ENCODE measurements at regions of chr5 and their contacts with region 1.

Region 1: GRCh38 chr5:159209438-159210305 is at the start of gene RNF145:
- DNase-seq: peak; percentile 90 to 95 (median 94)
- ATAC-seq: peak; percentile 57
- H3K4me3 ChIP-seq: peak within 1 kb of the TSS; percentile 62
- H3K27ac ChIP-seq: peak within 1 kb of the TSS; percentile 96
- H3K4me1 ChIP-seq: peaks cover 9 to 42% of the 10 kb centered on the region in 2 experiments
- H3K27me3 ChIP-seq: no peaks in the 10 kb centered on the region
- CTCF ChIP-seq: no peak
- EP300 ChIP-seq: no peak
- POLR2A ChIP-seq: peak; percentile 86
- RAD21 ChIP-seq: 0 out of 4 replicates have a peak, but pooled peaks of 1 of the 2 experiments have one; percentile 4
- polyA plus RNA-seq, gene RNF145: 13.6 to 18.8 TPM

Region 2: GRCh38 chr5:159156426-159157238 is 53.0 kb before region 1 on chr5:
- CTCF ChIA-PET with region 1: no interaction called
- POLR2A ChIA-PET with region 1: interaction called, 3 read pairs
- in situ Hi-C with region 1: no loop called
- intact Hi-C with region 1: loop called (anchors 5 kb)
- DNase-seq: peak; percentile 71 to 80 (median 72)
- ATAC-seq: peak; percentile 97
- H3K4me3 ChIP-seq: no peak overlapping the region
- H3K27ac ChIP-seq: no peak overlapping the region
- H3K4me1 ChIP-seq: no peaks in the 10 kb centered on the region
- H3K27me3 ChIP-seq: no peaks in the 10 kb centered on the region
- CTCF ChIP-seq: peak; percentile 66 to 87 (median 76); a peak in 5 of 6 replicates
- EP300 ChIP-seq: no peak
- POLR2A ChIP-seq: no peak
- RAD21 ChIP-seq: peak; percentile 86 to 91

Region 3: DNA sequence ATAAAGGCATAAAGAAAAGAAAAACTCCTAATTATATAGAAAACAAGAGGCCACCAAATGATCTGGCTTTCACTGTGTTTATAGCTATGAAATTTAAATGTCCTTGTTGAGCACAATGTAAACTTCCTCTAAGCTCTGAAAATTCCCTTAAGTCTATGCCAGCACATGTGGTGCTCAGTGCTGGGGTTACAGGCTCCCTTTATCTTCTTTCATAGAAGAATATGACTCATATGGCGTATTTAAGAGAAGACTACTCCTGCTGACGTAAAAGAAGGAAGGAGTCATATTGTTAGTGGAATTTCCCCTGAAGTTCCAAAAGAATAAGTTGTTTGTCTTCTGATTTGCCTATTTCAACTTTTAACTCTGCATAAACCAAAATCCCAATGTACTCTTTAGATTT is 30.7 kb before region 1 on chr5:
- CTCF ChIA-PET with region 1: no interaction called
- POLR2A ChIA-PET with region 1: interaction called, 4 read pairs
- in situ Hi-C with region 1: no loop called
- intact Hi-C with region 1: loop called (anchors 2 kb)
- DNase-seq: peak; percentile 27 to 73 (median 44)
- ATAC-seq: peak; percentile 84
- H3K4me3 ChIP-seq: no peak overlapping the region
- H3K27ac ChIP-seq: peak overlapping the region; percentile 60; the same call in 2 of the 3 replicates
- H3K4me1 ChIP-seq: peaks cover 0 to 13% of the 10 kb centered on the region in 2 experiments; a peak in 2 of 5 replicates
- H3K27me3 ChIP-seq: no peaks in the 10 kb centered on the region
- CTCF ChIP-seq: no peak
- EP300 ChIP-seq: no peak
- POLR2A ChIP-seq: no peak
- RAD21 ChIP-seq: no peak

Region 4: DNA sequence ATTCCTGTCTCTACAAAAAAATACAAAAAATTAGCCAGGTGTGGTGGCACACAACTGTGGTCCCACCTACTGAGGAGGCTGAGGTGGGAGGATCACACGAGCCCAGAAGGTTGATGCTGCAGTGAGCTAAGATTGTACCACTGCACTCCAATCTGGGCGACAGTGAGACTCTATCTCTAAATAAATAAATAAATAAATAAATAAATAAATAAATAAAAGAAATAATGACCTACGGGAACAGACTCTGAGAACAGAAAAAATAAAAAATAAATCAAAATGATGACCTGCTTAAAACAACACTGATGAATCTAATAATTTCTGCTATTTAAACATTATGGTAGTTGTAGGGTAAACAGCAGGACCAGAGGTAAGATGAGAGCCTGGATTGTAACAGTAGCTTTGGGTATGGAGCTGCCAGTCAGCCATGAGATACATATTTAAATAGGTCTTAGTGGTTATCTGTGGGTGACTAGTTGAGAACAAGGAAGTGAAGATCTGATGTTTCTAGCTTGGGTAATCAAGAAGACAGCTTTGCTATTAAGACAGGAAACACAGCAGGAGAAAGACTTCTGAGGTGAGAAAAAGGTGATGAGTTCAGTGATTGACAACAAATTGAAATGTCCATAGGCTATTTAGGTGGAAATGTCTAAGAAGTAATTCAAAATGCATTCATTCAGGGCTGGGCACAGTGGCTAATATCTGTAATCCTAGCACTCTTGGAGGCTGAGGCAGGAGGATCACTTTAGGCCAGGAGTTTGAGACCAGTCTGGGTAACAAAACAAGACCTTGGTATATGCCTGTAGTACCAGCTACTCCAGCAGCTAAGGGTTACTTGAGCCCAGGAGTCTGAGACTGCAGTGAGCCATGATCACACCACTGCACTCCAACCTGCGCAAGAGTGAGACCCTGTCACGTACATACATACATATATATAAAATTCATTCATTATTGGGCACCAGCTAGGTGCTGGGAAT is 11.3 kb before region 1 on chr5:
- CTCF ChIA-PET with region 1: no interaction called
- POLR2A ChIA-PET with region 1: interaction called, 20 read pairs
- in situ Hi-C with region 1: no loop called
- intact Hi-C with region 1: no loop called
- DNase-seq: no peak
- ATAC-seq: peak; percentile 36
- H3K4me3 ChIP-seq: no peak overlapping the region
- H3K27ac ChIP-seq: no peak overlapping the region
- H3K4me1 ChIP-seq: peaks cover 0 to 17% of the 10 kb centered on the region in 2 experiments; a peak in 3 of 5 replicates
- H3K27me3 ChIP-seq: no peaks in the 10 kb centered on the region
- CTCF ChIP-seq: no peak
- EP300 ChIP-seq: no peak
- POLR2A ChIP-seq: no peak
- RAD21 ChIP-seq: no peak

Region 5: GRCh38 chr5:159262859-159263567 is 53.3 kb after region 1 on chr5 and contains the start of gene UBLCP1:
- CTCF ChIA-PET with region 1: no interaction called
- POLR2A ChIA-PET with region 1: interaction called, 3 read pairs
- in situ Hi-C with region 1: no loop called
- intact Hi-C with region 1: loop called (anchors 2 kb)
- DNase-seq: peak; percentile 81 to 90 (median 84)
- ATAC-seq: peak; percentile 93
- H3K4me3 ChIP-seq: peak within 1 kb of the TSS; percentile 86
- H3K27ac ChIP-seq: peak within 1 kb of the TSS; percentile 98
- H3K4me1 ChIP-seq: peaks cover 4 to 7% of the 10 kb centered on the region in 2 experiments; a peak in 3 of 5 replicates
- H3K27me3 ChIP-seq: no peaks in the 10 kb centered on the region
- CTCF ChIP-seq: no peak
- EP300 ChIP-seq: no peak
- POLR2A ChIP-seq: peak; percentile 93
- RAD21 ChIP-seq: no peak
- polyA plus RNA-seq, gene UBLCP1: 22.0 to 30.2 TPM

Region 6: DNA sequence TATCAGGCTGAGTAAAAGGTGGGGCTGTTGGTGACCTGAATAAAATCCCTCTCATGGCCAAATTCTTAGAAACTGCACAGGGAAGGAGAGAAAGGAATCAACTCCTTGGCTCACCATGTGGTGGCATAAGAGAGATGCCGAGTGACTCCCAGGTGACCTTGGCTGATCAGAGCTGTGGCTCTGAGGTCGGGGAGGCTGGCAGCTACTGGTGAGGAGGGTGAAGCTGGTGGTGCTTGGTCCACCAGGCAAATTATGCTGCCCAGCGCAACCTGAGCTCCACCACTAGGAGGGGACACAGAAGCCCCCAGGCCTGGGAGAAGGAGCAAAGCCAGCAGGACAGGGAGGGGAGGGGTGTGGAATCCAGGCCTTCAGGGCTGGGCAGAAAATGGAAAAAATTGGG is 231.8 kb after region 1 on chr5:
- CTCF ChIA-PET with region 1: no interaction called
- POLR2A ChIA-PET with region 1: no interaction called
- in situ Hi-C with region 1: no loop called
- intact Hi-C with region 1: no loop called
- DNase-seq: peak in 3 of 4 experiments; percentile 5 to 24 (median 17)
- ATAC-seq: peak; percentile 70
- H3K4me3 ChIP-seq: no peak overlapping the region
- H3K27ac ChIP-seq: no peak overlapping the region
- H3K4me1 ChIP-seq: no peaks in the 10 kb centered on the region
- H3K27me3 ChIP-seq: peaks cover 0 to 7% of the 10 kb centered on the region in 2 experiments; a peak in 2 of 5 replicates
- CTCF ChIP-seq: peak; percentile 12 to 28 (median 21); a peak in 2 of 6 replicates
- EP300 ChIP-seq: no peak
- POLR2A ChIP-seq: no peak
- RAD21 ChIP-seq: peak; percentile 37 to 47; a peak in 3 of 4 replicates

Measured in K562 (cell line).